Caco-2 (cell line): ENCODE measurements at regions of chr19 and their contacts with region 1.

Region 1: DNA sequence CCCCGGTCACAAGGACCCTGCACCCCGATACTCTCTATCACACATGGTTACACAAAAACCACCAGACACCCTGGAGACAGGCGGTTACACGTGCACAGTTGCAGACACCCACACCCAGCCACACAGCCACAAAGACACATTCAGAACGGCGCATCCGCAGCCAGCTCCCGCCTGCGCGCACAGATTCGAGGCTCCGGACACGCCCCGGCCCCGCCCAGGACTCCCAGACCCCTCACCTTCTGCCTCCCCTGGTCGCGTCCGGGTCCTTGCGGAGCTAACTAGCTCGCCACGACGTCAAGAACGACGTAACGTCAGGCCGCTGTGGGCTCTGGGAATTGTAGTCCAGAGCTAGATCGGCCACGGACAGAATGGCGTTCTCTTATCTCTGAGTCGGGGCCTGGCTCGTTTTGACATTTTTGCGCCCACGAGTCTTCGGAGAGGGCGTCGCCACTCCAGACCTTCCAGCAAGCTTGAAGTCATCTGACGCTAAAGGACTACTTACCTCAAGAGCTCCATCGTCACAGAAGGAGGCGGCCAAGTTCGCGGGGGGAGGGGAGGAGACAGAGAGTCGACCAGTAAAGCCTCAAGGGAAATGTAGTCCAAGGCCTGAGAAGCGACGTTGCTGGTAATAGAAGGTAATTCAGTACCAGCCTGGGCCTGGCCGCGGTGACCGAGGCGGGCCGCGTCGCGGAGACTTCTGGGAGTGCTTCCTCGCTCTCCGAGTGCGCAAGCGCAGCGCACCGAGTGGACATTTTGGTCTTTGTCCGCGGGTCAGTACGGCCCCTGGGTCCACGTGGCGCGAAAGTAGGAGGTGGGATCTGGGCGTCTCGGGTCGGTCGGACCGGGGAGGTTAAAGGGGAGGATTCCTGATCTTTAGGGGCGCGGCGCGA is at the starts of genes ZNF146 and ZNF565:
- DNase-seq: peak; percentile 98 to 99
- H3K4me3 ChIP-seq: peak within 1 kb of the TSS; percentile 79
- H3K4me3 Mint-ChIP-seq: no peak within 1 kb of the TSS
- H3K27ac Mint-ChIP-seq: no peak within 1 kb of the TSS
- H3K4me1 ChIP-seq: no peaks in the 10 kb centered on the region
- H3K4me1 Mint-ChIP-seq: no peaks in the 10 kb centered on the region
- H3K27me3 ChIP-seq: no peaks in the 10 kb centered on the region
- H3K27me3 Mint-ChIP-seq: no peaks in the 10 kb centered on the region
- CTCF ChIP-seq: no peak
- total RNA-seq, gene ZNF146: 76.1 and 76.4 TPM in 2 replicates
- total RNA-seq, gene ZNF565: 3.8 and 4.1 TPM in 2 replicates

Region 2: DNA sequence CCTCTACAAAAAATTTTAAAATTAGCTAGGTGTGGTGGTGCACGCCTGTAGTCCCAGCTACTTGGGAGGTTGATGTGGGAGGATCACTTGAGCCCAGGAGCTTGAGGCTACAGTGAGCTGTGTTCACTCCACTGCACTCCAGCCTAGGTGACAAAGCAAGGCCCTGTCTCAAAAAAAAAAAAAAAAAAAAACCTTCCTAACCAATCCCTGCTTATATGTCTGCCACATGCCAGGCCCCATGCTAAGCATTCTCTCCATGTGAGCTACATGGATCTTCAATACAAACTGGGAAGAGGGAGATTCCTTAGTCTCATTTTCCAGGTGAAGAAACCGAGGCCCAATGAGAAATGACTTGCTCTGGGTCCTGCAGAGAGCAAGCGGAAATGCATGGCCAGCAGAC is 105.9 kb before region 1 on chr19:
- CTCF ChIA-PET with region 1: no interaction called
- POLR2A ChIA-PET with region 1: no interaction called
- intact Hi-C with region 1: no loop called
- DNase-seq: no peak
- H3K4me3 ChIP-seq: no peak overlapping the region
- H3K4me3 Mint-ChIP-seq: no peak overlapping the region
- H3K27ac Mint-ChIP-seq: no peak overlapping the region
- H3K4me1 ChIP-seq: 0 out of 2 replicates have a peak, but pooled peaks cover 3% of the 10 kb centered on the region
- H3K4me1 Mint-ChIP-seq: peaks cover 6% of the 10 kb centered on the region
- H3K27me3 ChIP-seq: no peaks in the 10 kb centered on the region
- H3K27me3 Mint-ChIP-seq: no peaks in the 10 kb centered on the region
- CTCF ChIP-seq: no peak

Region 3: GRCh38 chr19:36132489-36132891 is 82.1 kb before region 1 on chr19:
- CTCF ChIA-PET with region 1: interaction called, 13 read pairs
- POLR2A ChIA-PET with region 1: interaction called, 8 read pairs
- intact Hi-C with region 1: loop called (anchors 2 kb)
- DNase-seq: no peak
- H3K4me3 ChIP-seq: no peak overlapping the region
- H3K4me3 Mint-ChIP-seq: no peak overlapping the region
- H3K27ac Mint-ChIP-seq: no peak overlapping the region
- H3K4me1 ChIP-seq: peaks cover 9% of the 10 kb centered on the region
- H3K4me1 Mint-ChIP-seq: peaks cover 22% of the 10 kb centered on the region
- H3K27me3 ChIP-seq: no peaks in the 10 kb centered on the region
- H3K27me3 Mint-ChIP-seq: no peaks in the 10 kb centered on the region
- CTCF ChIP-seq: no peak

Region 4: GRCh38 chr19:36139473-36140303 is 74.9 kb before region 1 on chr19 and contains the start of gene CAPNS1:
- CTCF ChIA-PET with region 1: no interaction called
- POLR2A ChIA-PET with region 1: interaction called, 6 read pairs
- intact Hi-C with region 1: loop called (anchors 1 kb)
- DNase-seq: peak; percentile 97 to 99
- H3K4me3 ChIP-seq: peak within 1 kb of the TSS; percentile 70
- H3K4me3 Mint-ChIP-seq: peak within 1 kb of the TSS; percentile 93
- H3K27ac Mint-ChIP-seq: peak within 1 kb of the TSS; percentile 91
- H3K4me1 ChIP-seq: peaks cover 7% of the 10 kb centered on the region
- H3K4me1 Mint-ChIP-seq: peaks cover 21% of the 10 kb centered on the region
- H3K27me3 ChIP-seq: no peaks in the 10 kb centered on the region
- H3K27me3 Mint-ChIP-seq: no peaks in the 10 kb centered on the region
- CTCF ChIP-seq: peak; percentile 33 to 46
- total RNA-seq, gene CAPNS1: 480 and 489 TPM in 2 replicates

Region 5: GRCh38 chr19:36152352-36153091 is 62.1 kb before region 1 on chr19 and contains the start of gene COX7A1:
- CTCF ChIA-PET with region 1: no interaction called
- POLR2A ChIA-PET with region 1: no interaction called
- intact Hi-C with region 1: no loop called
- DNase-seq: no peak
- H3K4me3 ChIP-seq: no peak within 1 kb of the TSS
- H3K4me3 Mint-ChIP-seq: no peak within 1 kb of the TSS
- H3K27ac Mint-ChIP-seq: no peak within 1 kb of the TSS
- H3K4me1 ChIP-seq: no peaks in the 10 kb centered on the region
- H3K4me1 Mint-ChIP-seq: peaks cover 10% of the 10 kb centered on the region
- H3K27me3 ChIP-seq: no peaks in the 10 kb centered on the region
- H3K27me3 Mint-ChIP-seq: no peaks in the 10 kb centered on the region
- CTCF ChIP-seq: no peak
- total RNA-seq, gene COX7A1: not detected in 2 replicates

Region 6: DNA sequence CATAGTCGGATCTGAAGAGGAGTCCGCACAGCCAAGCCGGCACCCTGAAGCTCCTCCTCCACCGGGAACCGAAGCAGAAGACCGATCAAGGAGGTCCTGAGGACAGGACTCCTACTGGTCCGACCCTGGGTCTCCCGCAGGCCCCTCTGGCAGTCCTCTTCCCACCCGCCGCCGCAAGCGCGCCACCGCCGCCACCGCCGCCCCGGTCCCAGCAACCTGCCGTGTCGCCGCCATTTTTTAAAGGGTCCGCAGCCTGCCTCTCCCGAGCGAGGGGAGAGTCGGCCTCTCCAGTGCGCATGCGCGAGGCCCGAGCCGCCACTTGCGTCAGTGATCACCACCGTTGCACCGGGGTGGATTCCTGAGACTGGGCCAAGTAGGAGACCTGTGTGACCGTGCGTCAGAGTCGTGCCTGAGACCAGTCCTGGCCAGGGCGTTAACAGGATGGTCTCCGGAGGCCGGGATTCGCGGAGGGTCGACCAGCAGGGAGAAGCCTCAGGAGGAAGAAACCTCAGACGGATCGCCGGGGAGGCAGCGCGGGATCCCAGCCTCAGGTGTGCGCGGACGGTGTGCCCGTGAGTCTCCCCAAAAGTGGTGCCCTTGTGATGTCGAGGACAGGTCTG is 51.8 kb after region 1 on chr19:
- CTCF ChIA-PET with region 1: no interaction called
- POLR2A ChIA-PET with region 1: no interaction called
- intact Hi-C with region 1: no loop called
- DNase-seq: no peak
- H3K4me3 ChIP-seq: no peak overlapping the region
- H3K4me3 Mint-ChIP-seq: no peak overlapping the region
- H3K27ac Mint-ChIP-seq: no peak overlapping the region
- H3K4me1 ChIP-seq: no peaks in the 10 kb centered on the region
- H3K4me1 Mint-ChIP-seq: no peaks in the 10 kb centered on the region
- H3K27me3 ChIP-seq: no peaks in the 10 kb centered on the region
- H3K27me3 Mint-ChIP-seq: peaks cover 10% of the 10 kb centered on the region
- CTCF ChIP-seq: no peak

Region 7: DNA sequence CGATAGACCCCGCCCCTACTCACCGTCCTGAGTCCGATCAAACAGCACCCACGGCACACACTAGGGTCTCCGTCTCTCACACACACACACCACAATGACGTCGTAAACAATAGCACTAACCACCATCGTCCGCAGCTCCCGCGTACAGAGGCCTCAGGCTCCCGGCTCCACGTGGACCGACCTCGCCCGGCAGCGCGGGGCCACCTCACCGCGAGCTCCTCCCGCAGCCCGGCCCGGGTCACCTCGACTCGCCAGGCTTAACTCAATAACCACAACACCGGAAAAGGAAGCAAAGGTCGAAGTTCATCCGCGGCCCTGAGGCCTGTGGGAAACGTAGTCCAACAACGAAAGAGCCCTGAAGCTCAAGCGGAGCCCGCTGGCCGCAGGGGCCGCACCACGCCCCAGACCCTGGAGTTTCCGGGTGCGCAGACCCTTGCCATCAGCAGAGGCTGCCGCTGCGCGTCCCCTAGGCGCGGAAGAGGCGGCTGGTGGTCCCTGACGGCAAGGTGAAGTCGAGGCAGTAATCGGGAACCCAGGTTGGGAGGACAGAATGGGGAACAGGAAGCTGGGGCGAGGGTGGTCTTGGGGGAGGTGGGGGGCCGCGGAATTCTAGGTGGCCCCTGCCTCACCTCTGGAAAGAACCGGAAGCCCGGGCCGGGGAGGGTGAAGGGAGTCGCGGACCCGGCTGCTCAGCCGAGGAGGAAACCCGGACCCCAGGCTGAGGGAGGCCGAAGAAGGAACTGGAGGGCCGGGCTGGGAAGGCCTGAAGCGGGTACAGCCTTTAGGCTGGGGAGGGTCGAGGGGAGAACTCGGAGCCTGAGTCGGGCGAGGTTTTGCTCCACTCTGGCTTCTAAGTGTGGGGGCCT is 358.6 kb after region 1 on chr19 and contains the start of gene ZNF529:
- CTCF ChIA-PET with region 1: no interaction called
- POLR2A ChIA-PET with region 1: interaction called, 3 read pairs
- intact Hi-C with region 1: loop called (anchors 5 kb)
- DNase-seq: peak; percentile 95
- H3K4me3 ChIP-seq: peak within 1 kb of the TSS; percentile 74
- H3K4me3 Mint-ChIP-seq: peak within 1 kb of the TSS; percentile 87
- H3K27ac Mint-ChIP-seq: peak within 1 kb of the TSS; percentile 93
- H3K4me1 ChIP-seq: 0 out of 2 replicates have a peak, but pooled peaks cover 6% of the 10 kb centered on the region
- H3K4me1 Mint-ChIP-seq: peaks cover 25% of the 10 kb centered on the region
- H3K27me3 ChIP-seq: no peaks in the 10 kb centered on the region
- H3K27me3 Mint-ChIP-seq: no peaks in the 10 kb centered on the region
- CTCF ChIP-seq: peak in 1 of 2 experiments; percentile 7
- total RNA-seq, gene ZNF529: 5.6 and 10.5 TPM in 2 replicates

Region 8: DNA sequence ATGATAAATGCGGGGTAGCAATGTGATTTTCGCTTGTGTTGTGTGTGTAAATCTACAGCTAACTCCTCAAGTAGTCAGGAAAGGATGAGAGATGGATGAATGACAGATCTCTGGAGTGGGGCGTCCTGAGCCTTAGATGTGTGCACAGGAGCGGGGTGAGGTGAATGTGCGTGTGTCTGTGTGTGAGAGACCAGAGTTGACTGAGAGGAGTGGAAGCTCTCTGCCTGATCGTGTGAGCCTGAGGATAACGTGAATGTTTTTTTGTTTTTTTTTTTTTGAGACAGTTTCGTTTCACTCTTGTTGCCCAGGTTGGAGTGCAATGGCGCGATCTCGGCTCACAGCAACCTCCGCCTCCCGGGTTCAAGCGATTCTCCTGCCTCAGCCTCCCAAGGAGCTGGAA is 451.2 kb after region 1 on chr19:
- CTCF ChIA-PET with region 1: no interaction called
- POLR2A ChIA-PET with region 1: no interaction called
- intact Hi-C with region 1: loop called (anchors 10 kb)
- DNase-seq: no peak
- H3K4me3 ChIP-seq: peak overlapping the region; percentile 50
- H3K4me3 Mint-ChIP-seq: peak overlapping the region; percentile 98
- H3K27ac Mint-ChIP-seq: peak overlapping the region; percentile 91
- H3K4me1 ChIP-seq: no peaks in the 10 kb centered on the region
- H3K4me1 Mint-ChIP-seq: peaks cover 7% of the 10 kb centered on the region
- H3K27me3 ChIP-seq: no peaks in the 10 kb centered on the region
- H3K27me3 Mint-ChIP-seq: no peaks in the 10 kb centered on the region
- CTCF ChIP-seq: no peak

Region 9: GRCh38 chr19:37217855-37218591 is 1003.4 kb after region 1 on chr19 and contains the start of gene ZNF383:
- CTCF ChIA-PET with region 1: no interaction called
- POLR2A ChIA-PET with region 1: no interaction called
- intact Hi-C with region 1: loop called (anchors 10 kb)
- DNase-seq: peak; percentile 94 to 96
- H3K4me3 ChIP-seq: peak within 1 kb of the TSS; percentile 88
- H3K4me3 Mint-ChIP-seq: peak within 1 kb of the TSS; percentile 86
- H3K27ac Mint-ChIP-seq: peak within 1 kb of the TSS; percentile 92
- H3K4me1 ChIP-seq: no peaks in the 10 kb centered on the region
- H3K4me1 Mint-ChIP-seq: peaks cover 11% of the 10 kb centered on the region
- H3K27me3 ChIP-seq: no peaks in the 10 kb centered on the region
- H3K27me3 Mint-ChIP-seq: no peaks in the 10 kb centered on the region
- CTCF ChIP-seq: no peak
- total RNA-seq, gene ZNF383: 4.4 and 5.5 TPM in 2 replicates